ENCODE measurements at regions of chr17 and their contacts with region 1.

Region 1: DNA sequence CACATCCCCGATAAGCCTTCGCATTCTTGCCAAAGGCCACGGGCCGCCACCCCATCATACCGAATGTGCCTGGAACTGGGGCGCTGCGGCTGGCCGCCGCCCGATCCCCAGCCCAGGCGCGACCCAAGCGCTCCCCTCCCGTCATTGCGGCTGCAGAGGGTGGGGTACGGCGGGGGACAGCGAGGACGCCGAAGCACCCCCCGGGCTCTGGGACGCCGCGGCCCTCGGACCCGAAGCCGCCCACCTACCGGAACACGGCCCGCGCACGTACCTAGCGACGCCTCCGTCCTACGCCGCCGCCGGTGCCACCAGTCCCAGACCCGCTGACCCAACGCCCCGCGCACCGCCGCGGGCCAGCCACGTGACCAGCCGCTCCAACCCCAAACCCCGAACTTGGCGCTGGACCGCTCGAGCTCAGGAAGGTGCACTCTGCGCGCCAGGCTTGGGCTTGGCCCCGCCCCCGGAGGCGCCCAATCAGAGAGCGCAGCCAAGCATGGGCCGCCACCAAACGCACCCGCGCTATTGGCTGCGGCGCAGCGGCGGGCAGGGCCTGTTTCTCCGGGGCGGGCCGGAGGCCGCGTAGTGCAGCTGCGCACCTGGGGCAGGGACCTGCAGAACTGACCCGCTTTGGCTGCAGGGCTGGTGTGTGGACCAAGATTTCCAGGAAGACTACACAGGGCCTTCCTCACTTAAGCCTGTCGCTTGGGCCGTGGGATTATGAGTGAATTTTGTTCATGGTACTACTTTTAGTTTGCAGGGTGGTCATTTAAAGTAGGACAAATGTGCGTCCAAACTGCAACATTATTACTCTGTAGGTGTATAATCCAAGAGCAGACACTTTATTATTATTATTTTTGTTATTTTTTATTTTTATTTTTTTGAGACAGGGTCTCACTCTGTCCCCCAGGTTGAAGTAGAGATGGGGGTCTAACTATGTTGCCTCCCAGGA is at the start of gene SHMT1:
- DNase-seq: peak; percentile 95
- ATAC-seq: peak; percentile 100
- H3K4me3 Mint-ChIP-seq: peak within 1 kb of the TSS; percentile 87
- H3K27ac Mint-ChIP-seq: peak within 1 kb of the TSS; percentile 66
- H3K4me1 Mint-ChIP-seq: peaks cover 12% of the 10 kb centered on the region
- H3K27me3 Mint-ChIP-seq: no peaks in the 10 kb centered on the region
- total RNA-seq, gene SHMT1: 58.7 to 61.0 TPM

Region 2: GRCh38 chr17:18225121-18225566 is 138.2 kb before region 1 on chr17:
- CTCF ChIA-PET with region 1: no interaction called
- POLR2A ChIA-PET with region 1: no interaction called
- intact Hi-C with region 1: loop called in 1 of 2 experiments (anchors 1 kb)
- DNase-seq: peak; percentile 99
- ATAC-seq: peak; percentile 98
- H3K4me3 Mint-ChIP-seq: peak overlapping the region; percentile 56
- H3K27ac Mint-ChIP-seq: peak overlapping the region; percentile 55
- H3K4me1 Mint-ChIP-seq: peaks cover 18% of the 10 kb centered on the region
- H3K27me3 Mint-ChIP-seq: no peaks in the 10 kb centered on the region

Region 3: DNA sequence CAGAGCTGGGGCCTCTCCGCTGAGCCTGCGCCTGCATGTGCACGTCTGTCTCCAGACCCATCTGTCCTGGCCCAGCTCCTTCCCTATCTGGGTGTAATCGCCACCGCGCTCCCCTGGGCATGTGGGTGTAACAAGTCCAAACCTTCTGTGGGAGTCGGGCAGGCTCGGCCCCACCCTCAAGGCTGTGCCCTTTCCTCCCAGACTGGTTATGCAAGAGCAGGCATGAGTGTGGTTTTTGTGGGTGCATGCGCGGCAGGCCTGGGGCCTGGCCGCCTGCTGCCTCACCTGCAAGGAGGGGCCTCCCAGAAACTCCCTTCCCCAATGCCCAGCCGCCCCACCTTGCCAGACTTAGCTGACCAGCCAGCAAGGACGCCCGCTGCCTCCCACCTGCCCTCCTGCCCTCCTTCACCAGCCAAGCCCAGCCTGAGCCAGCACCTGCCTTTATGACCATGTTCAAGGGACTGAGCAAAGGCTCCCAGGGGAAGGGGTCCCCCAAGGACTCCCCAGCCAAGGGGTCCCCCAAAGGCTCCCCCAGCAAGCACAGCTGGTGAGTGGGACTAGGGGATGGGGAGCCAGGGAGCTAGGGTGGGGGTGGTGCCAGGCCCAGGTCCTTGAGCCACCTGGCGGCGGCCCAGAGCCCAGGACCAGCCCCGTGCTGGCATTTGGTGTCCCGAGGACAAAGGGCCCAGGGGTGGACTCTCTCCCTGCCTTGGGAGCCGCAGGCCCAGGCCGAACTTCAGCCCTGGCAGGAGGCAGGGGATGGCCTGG is 14.2 kb after region 1 on chr17 and contains the start of gene EVPLL:
- CTCF ChIA-PET with region 1: no interaction called
- POLR2A ChIA-PET with region 1: no interaction called
- intact Hi-C with region 1: no loop called
- DNase-seq: no peak
- ATAC-seq: no peak
- H3K4me3 Mint-ChIP-seq: no peak within 1 kb of the TSS
- H3K27ac Mint-ChIP-seq: no peak within 1 kb of the TSS
- H3K4me1 Mint-ChIP-seq: no peaks in the 10 kb centered on the region
- H3K27me3 Mint-ChIP-seq: peaks cover 8% of the 10 kb centered on the region
- total RNA-seq, gene EVPLL: 0.37 TPM in 1 of 2 experiments, not detected in the other